Activated CD8-positive, alpha-beta T cell treated with anti-CD3 and anti-CD28 coated beads for 36 hours (primary cell): ENCODE measurements at regions of chr6 and their contacts with region 1.

Region 1: DNA sequence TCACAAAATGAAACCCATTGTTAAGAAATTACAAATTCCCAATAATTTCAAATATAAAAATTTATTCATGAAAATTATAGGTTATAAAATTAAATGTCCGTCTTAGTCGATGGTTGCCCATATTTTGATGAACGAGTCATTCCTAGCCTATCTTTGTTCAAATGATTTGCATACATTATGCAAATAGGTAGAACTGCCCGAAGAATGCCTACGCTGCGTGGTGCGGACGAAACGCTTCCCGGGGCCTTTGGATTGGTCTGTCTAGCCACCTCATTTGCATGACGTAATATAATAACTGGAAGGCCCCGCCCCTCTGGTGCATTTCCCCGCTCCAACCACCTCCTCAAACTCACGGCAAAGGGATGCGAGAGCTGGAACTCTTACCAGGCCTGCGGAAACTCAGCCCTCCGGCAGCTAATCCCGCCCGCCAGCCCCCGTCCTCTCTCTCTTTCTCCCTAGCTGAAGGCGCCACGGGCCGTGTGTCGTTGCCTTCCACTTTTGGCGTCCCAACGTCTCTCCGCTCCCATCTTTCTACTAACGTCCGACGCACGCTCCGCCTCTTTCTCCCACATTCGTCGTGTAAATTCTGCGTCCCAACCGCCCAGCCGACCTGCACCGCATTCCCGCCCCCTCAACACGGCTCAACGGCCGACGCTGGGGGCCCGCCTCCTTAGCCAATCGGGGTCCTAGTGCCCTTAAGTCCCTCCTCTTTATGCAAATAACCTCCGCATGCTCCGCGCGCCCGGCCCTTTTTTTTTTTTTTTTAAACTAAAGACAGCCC is 520 bp upstream of the PRRC2A start:
- DNase-seq: peak; percentile 99
- ATAC-seq: peak; percentile 84
- H3K4me3 Mint-ChIP-seq: peak overlapping the region; percentile 95
- H3K27ac Mint-ChIP-seq: peak overlapping the region; percentile 97
- H3K4me1 Mint-ChIP-seq: peaks cover 59% of the 10 kb centered on the region
- H3K27me3 Mint-ChIP-seq: no peaks in the 10 kb centered on the region
- CTCF ChIP-seq: no peak

Region 2: DNA sequence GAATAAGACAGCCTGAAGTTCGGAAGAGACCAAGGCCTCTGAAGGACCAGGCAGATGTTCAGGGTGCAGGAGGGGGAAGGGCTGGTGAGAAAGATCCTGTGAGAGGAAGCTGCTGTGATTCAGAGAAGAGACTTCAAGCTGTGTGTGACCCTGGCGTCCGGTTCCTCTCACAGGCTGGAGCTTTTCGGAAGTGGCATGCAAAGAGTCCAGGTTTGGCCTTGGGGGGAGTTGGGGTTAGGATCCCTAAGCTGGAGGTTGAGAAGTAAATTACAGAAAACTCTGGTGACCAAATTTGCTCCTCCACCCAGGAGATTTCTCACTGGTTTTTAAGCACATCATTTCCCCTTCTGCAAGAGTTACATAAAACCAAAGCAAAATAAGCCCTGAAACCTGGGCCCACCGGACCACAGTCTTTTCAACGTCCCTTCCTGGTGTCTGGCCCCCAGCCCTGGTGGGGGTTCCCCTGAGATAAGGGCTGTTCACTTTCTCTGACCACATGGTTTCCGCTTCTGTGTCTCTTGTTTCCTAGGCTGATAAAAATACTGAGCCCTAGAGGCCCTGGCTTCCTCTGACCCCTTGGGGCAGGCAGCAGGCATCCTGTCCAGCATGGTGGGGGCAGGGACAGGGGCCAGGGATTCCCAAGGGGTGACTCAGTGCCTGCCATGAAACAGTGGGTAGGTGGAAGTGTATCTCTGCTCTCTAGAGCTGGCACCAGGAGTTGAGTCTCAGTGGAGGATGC is 59.9 kb before region 1 on chr6:
- CTCF ChIA-PET with region 1: no interaction called
- POLR2A ChIA-PET with region 1: interaction called, 18 read pairs
- intact Hi-C with region 1: no loop called
- DNase-seq: peak; percentile 86
- ATAC-seq: peak; percentile 69
- H3K4me3 Mint-ChIP-seq: peak overlapping the region; percentile 56
- H3K27ac Mint-ChIP-seq: peak overlapping the region; percentile 90
- H3K4me1 Mint-ChIP-seq: peaks cover 78% of the 10 kb centered on the region
- H3K27me3 Mint-ChIP-seq: no peaks in the 10 kb centered on the region
- CTCF ChIP-seq: no peak

Region 3: GRCh38 chr6:31639449-31639861 is 19.5 kb after region 1 on chr6:
- CTCF ChIA-PET with region 1: interaction called, 5 read pairs
- POLR2A ChIA-PET with region 1: interaction called, 235 read pairs
- intact Hi-C with region 1: no loop called
- DNase-seq: peak; percentile 49
- ATAC-seq: peak; percentile 48
- H3K4me3 Mint-ChIP-seq: no peak overlapping the region
- H3K27ac Mint-ChIP-seq: peak overlapping the region; percentile 74
- H3K4me1 Mint-ChIP-seq: peaks cover 5% of the 10 kb centered on the region
- H3K27me3 Mint-ChIP-seq: no peaks in the 10 kb centered on the region
- CTCF ChIP-seq: no peak

Region 4: GRCh38 chr6:31665501-31666336 is 45.7 kb after region 1 on chr6 and contains the start of gene CSNK2B:
- CTCF ChIA-PET with region 1: no interaction called
- POLR2A ChIA-PET with region 1: interaction called, 10 read pairs
- intact Hi-C with region 1: loop called (anchors 2 kb)
- DNase-seq: peak; percentile 99
- ATAC-seq: peak; percentile 88
- H3K4me3 Mint-ChIP-seq: peak within 1 kb of the TSS; percentile 98
- H3K27ac Mint-ChIP-seq: peak within 1 kb of the TSS; percentile 97
- H3K4me1 Mint-ChIP-seq: peaks cover 61% of the 10 kb centered on the region
- H3K27me3 Mint-ChIP-seq: no peaks in the 10 kb centered on the region
- CTCF ChIP-seq: no peak
- total RNA-seq, gene CSNK2B: 241 to 247 TPM

Region 5: DNA sequence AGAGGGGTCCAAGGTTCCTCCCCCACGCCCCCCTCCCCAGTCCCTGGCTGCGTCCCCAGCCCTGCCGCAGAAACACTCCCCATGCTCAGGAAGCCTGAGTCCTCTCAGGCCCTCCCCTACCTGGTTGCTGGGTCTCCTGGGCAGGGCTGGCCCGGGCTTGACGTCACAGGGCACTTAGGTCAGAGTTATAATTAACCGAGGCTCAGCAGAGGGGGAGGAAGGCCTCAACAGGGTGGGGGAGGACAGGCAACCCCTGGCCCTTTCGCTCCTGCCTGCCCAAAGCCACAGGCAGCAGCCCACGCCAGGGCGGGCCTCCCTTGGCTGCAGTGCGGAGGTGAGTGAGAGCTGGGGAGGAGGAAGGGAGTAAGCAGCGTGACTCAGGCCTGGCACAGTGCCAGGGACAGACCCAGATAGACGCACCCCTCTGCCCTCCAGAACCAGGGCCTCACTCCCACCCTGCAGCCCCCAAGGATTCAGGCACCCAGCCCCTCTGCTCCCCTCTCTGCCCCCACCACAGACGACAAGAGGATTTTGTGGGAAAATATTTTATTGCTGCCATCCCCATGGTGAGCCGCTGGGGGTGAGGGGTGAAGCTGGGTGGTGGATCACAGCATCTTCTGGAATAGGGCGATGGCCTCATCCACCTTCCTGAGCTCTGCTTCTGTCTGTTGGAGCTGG is 157.1 kb after region 1 on chr6 and contains the start of gene VWA7:
- CTCF ChIA-PET with region 1: no interaction called
- POLR2A ChIA-PET with region 1: no interaction called
- intact Hi-C with region 1: no loop called
- DNase-seq: peak; percentile 95
- ATAC-seq: peak; percentile 96
- H3K4me3 Mint-ChIP-seq: peak within 1 kb of the TSS; percentile 15
- H3K27ac Mint-ChIP-seq: peak within 1 kb of the TSS; percentile 73
- H3K4me1 Mint-ChIP-seq: peaks cover 36% of the 10 kb centered on the region
- H3K27me3 Mint-ChIP-seq: no peaks in the 10 kb centered on the region
- CTCF ChIP-seq: no peak
- total RNA-seq, gene VWA7: 1.6 TPM